GM13976 (cell line): ENCODE measurements at regions of chr1 and their contacts with region 1.

Region 1: GRCh38 chr1:50368179-50369012 is 54.8 kb downstream of the DMRTA2 start:
- DNase-seq: peak; percentile 65
- CTCF ChIP-seq: peak; percentile 67

Region 2: DNA sequence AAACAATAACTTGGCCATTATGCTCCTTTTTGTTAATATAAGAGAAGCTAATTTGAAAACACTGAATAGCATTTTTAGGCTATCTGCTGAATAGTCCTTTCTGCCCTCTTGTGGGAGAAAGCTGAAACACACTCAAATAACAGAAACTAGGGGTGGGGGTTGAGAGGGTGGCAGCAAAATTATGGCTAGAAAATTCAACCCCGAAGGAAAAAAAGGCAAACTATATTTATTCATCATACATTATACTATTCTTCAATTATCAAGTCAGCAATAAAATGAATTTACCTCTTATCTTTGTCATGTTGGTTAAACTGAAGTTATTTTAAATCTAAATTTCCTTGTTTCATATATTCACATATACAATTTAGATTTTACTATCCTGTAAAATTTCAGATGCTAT is 335.7 kb after region 1 on chr1:
- in situ Hi-C with region 1: loop called (anchors 25 kb)
- DNase-seq: peak; percentile 45
- CTCF ChIP-seq: peak; percentile 57